ENCODE measurements at regions of chr12 and their contacts with region 1.

Region 1: DNA sequence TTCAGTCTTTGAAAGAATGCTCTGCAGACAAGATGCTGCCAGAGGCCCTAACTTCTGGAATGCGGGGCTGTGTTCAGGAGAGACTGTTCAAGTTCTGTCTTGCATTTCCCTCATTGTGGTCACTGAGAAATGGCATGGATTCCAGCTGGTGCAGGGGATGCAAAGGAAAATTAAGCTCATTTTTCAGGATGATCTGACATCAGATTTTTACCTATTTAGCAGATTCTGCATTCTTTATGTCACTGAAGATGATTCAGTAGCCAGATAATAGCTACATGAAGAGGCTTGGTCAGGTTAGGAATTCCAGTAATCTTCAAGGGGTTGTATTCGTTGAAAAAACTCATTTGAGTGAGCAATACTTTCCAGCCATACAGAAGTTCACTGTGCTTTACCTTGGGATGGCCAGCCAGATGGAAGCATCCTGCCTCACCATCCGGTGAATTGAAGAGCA is 16.1 kb upstream of the MFAP5 start:
- DNase-seq: no peak
- H3K4me3 ChIP-seq: no peak overlapping the region
- H3K27ac ChIP-seq: peak overlapping the region in 1 of 2 donors; percentile 19
- H3K4me1 ChIP-seq: no peaks in the 10 kb centered on the region
- H3K27me3 ChIP-seq: no peaks in the 10 kb centered on the region
- CTCF ChIP-seq: no peak
- POLR2A ChIP-seq: no peak

Region 2: DNA sequence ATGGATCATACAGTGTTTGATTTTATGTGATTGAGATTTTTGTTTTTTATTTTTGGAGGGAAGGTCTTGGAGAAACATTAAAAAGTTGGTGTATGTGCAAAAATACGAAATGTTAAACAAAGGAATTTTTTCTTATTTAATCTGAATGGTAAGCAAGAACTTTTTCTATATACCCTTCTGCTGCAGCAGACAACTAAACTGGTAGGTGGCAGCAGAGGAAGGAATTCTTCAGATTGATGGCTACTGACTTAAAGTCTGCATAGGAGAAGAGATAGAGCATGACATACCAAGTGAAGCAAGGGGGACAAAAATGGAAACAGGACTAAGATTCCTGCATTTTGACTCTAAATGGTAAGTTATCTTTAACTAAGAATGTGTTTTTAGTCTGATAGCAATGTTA is 101.7 kb after region 1 on chr12:
- intact Hi-C with region 1: no loop called
- DNase-seq: no peak
- H3K4me3 ChIP-seq: no peak overlapping the region
- H3K27ac ChIP-seq: no peak overlapping the region
- H3K4me1 ChIP-seq: no peaks in the 10 kb centered on the region
- H3K27me3 ChIP-seq: no peaks in the 10 kb centered on the region
- CTCF ChIP-seq: no peak
- POLR2A ChIP-seq: no peak

Region 3: DNA sequence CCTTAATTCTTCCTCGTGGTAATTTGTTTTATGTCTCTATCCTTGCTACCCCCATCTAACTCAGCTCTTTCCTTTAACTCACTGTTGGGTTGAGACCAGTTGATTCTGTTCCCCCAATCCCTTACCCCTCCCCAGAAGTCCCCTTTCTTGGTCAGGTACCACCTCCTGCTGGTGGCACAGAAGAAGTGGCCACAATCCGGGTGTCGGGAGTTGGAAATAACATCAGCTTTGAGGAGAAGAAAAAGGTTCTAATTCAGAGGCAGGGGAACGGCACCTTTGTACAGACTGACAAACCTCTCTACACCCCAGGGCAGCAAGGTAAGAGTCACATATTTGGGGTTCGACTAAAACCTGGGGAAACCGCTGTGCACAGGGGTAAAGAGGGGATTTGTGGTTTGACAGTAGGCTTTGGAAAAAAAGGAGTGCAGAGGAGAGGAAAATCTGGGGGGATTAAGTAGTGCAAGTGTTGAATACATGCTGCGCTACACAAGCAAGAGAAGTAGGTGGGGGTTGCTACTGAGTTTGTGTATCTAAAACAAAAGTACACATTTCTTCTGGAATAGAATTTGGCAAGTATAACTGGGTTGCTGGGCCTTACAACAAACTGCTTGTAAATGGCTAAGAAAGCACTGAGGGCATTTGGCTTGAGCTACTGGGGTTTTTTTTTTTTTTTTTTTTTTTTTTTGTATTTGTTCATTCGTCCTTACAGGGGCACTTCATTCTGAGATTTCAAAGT is 145.0 kb after region 1 on chr12:
- intact Hi-C with region 1: loop called (anchors 10 kb)
- DNase-seq: peak; percentile 33 to 34
- H3K4me3 ChIP-seq: no peak overlapping the region
- H3K27ac ChIP-seq: no peak overlapping the region
- H3K4me1 ChIP-seq: no peaks in the 10 kb centered on the region
- H3K27me3 ChIP-seq: no peaks in the 10 kb centered on the region
- CTCF ChIP-seq: peak; percentile 64 to 70 (median 68)
- POLR2A ChIP-seq: no peak

Measured in uterus (tissue), 4 donors.